ENCODE measurements at regions of chr2 and their contacts with region 1.

Region 1: DNA sequence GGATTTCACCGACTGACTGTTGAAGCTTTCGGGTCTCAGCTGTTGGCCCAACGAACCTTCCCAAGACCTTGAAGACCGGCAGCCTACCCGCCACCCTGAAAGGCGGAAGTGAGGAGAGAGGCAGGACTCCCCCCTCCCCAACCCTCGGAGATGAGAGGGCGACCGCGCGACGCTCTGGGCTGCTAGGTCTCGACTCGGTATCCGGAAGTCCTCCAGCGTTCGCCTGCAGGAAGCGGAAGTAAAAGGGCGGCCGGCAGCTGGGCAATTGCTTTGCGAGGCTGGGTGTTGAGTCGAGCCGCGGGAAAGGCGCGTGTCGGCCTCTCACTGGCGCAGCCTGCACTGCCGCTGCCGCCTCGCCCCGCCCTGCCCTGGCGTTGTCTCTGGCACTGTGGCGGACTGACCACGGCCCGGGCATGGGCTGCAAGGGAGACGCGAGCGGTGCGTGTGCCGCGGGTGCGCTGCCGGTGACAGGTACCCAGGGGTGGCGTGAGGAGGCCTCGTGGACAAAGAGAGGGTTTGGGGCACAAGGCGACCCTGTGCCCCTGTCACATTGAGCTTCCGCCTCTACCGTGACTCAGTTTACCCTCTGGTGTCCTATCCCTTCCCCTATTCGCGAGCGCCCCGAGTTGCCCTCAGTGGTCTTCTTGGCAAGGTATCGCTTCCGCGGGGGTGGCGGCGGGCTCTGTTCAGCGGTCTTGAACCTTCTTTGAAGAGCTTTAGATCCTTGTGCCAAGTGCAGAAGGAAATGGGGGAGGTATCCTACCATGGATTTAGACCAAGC is at the start of gene UGGT1:
- DNase-seq: peak; percentile 89 to 98 (median 95)

Region 2: GRCh38 chr2:127884436-127885345 is 206.4 kb before region 1 on chr2:
- intact Hi-C with region 1: loop called (anchors 5 kb)
- DNase-seq: peak in 1 of 42 donors; percentile 3